ENCODE measurements at regions of chr3 and their contacts with region 1.

Region 1: GRCh38 chr3:150503402-150504099 is 42.7 kb downstream of the SERP1 start:
- DNase-seq: no peak
- ATAC-seq: peak; percentile 20

Region 2: DNA sequence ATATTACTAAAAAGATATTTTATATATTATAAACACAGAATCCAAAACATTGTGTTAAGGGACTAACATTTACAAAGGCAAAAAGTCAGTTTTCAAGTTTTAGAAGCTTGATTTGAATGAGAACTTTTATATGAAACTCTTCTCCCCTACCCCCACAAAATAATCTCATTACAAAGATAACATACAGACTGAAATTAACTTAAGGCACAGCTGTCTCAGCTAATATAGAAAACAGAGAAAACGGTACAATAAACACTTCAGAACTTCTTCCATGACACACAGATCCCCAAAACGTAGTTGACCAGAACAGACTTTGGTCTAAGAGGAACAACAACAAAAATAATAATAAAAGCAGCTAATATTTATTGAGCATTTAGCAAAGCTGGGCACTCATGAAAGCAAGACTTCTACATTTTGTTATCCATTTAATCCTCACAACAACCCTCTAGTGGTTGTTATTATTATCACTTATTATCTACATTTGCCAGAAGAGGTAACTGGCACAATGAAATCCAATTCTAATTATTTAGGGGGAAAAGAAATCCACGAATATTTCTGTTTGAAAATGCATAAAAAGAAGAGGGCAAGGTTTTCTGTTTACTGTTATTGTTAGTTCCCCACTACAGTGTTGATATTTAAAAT is 600.9 kb before region 1 on chr3:
- intact Hi-C with region 1: no loop called
- DNase-seq: no peak
- ATAC-seq: no peak

Region 3: GRCh38 chr3:150238998-150239619 is 264.4 kb before region 1 on chr3:
- intact Hi-C with region 1: loop called (anchors 10 kb)
- DNase-seq: no peak
- ATAC-seq: no peak

Region 4: GRCh38 chr3:150588027-150588830 is 84.7 kb after region 1 on chr3:
- intact Hi-C with region 1: no loop called
- DNase-seq: no peak
- ATAC-seq: no peak

Region 5: GRCh38 chr3:150653110-150653561 is 149.6 kb after region 1 on chr3:
- intact Hi-C with region 1: no loop called
- DNase-seq: no peak
- ATAC-seq: no peak